H1 (cell line): ENCODE measurements at regions of chr12 and their contacts with region 1.

Region 1: DNA sequence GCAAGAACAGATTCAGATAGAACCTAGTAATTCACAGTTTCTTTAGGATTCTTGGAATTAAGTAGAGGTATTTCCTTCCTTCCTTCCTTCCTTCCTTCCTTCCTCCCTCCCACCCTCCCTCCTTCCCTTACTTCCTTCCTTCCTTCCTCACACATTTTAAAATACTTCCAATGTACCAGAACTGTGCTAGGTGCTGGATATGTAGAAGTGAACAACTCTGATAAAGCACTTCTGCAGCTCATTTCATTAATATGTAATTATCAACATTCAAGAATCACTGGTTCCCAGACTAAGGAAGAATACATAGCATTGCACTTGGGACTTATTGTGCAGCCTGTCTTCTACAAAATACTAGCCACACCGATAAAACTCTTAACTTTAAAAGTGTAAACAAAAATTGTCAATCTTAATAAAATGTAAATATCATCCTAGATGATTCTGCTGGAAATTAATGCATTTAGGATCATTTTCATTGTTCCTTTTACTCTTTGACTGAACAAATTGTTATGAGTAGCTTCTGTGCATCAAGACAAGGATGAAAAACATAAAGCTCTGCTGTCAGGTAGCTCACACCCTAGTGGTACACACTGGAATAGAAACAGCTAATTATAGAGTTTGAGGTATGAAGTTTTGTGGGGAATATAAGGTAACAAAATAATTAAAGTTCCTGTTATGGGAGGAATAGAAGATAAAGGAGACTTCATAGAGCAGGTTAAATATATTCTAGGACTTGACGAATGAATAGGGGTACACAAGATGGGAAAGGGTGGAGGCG is 99.9 kb upstream of the MYF6 start:
- DNase-seq: no peak
- H3K4me3 ChIP-seq: no peak overlapping the region
- H3K27ac ChIP-seq: no peak overlapping the region
- H3K4me1 ChIP-seq: no peaks in the 10 kb centered on the region
- H3K27me3 ChIP-seq: no peaks in the 10 kb centered on the region
- CTCF ChIP-seq: peak in 1 of 3 experiments; percentile 37; a peak in 1 of 4 replicates
- EP300 ChIP-seq: no peak
- POLR2A ChIP-seq: no peak
- RAD21 ChIP-seq: peak in 1 of 2 experiments; percentile 28; a peak in 2 of 4 replicates

Region 2: DNA sequence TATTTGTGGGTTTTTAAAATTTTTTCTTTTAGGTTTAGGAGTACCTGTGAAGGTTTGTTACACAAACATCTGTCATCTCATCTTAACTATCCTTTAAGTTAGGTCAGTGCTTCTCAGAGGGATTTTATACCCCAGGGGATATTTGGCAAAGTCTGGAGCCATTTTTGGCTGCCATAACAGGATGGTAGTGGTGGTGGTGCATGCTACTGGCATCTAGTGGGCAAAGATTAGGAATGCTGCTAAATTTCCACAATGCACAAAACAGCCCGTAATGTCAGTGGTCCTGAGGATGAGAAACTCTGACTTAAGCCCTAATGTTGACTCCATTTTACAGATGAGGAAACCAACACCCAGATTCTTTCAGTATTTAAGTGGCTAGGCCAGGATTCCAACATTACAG is 14.7 kb after region 1 on chr12:
- CTCF ChIA-PET with region 1: interaction called, 13 read pairs
- POLR2A ChIA-PET with region 1: no interaction called
- DNase-seq: no peak
- H3K4me3 ChIP-seq: no peak overlapping the region
- H3K27ac ChIP-seq: no peak overlapping the region
- H3K4me1 ChIP-seq: no peaks in the 10 kb centered on the region; a peak in 1 of 7 replicates
- H3K27me3 ChIP-seq: no peaks in the 10 kb centered on the region
- CTCF ChIP-seq: peak in 2 of 3 experiments; percentile 38 to 46; a peak in 3 of 4 replicates
- EP300 ChIP-seq: no peak
- POLR2A ChIP-seq: no peak
- RAD21 ChIP-seq: peak; percentile 46 to 63

Region 3: DNA sequence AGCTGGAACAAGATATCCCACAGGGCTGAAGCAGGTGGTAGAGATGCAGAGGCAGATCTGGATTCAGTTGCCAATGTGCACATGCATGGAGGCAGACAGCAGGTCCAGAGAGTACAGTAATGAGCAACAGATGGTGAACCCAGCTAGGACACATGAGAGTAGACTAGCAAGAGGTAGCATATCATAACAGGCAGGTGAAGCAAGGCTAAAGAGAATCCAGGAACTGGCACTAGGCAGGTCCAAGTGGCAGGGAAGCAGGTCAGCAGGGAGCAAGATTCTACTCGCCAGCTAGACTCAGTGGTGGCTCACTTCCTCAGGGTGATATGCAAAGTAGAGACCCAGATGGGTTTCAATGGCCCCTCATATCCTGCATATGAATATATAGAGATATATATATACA is 84.6 kb after region 1 on chr12:
- CTCF ChIA-PET with region 1: no interaction called
- POLR2A ChIA-PET with region 1: no interaction called
- DNase-seq: no peak
- H3K4me3 ChIP-seq: no peak overlapping the region
- H3K27ac ChIP-seq: no peak overlapping the region
- H3K4me1 ChIP-seq: 0 out of 7 replicates have a peak, but pooled peaks cover 0 to 2% (median 0%) of the 10 kb centered on the region in 4 experiments
- H3K27me3 ChIP-seq: no peaks in the 10 kb centered on the region
- CTCF ChIP-seq: no peak
- EP300 ChIP-seq: no peak
- POLR2A ChIP-seq: no peak
- RAD21 ChIP-seq: no peak